ENCODE measurements at regions of chr4 and their contacts with region 1.

Region 1: DNA sequence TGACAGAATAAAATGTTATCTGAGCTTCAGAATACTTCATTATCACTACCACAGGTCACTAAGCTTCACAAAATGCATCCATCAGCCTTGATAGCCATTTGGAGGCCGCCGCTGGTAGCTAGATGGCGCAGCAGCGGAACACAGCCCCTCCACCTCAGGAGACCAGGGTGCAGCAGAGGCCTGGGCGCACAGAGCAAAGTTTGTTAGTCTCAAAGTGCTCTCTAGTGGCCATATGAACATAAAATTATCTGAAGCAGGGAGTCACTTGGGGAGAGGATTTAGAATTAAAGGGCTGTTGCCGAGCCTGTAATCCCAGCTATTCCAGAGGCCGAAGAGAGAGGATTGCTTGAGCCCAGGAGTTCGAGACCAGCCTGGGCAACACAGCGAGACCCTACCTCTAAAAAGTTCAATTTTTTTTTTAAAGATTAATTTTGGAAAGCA is 8.1 kb upstream of the DCTD start:
- DNase-seq: peak; percentile 84
- ATAC-seq: peak; percentile 32
- H3K4me3 ChIP-seq: no peak overlapping the region
- H3K27ac ChIP-seq: no peak overlapping the region
- H3K4me1 ChIP-seq: peaks cover 17% of the 10 kb centered on the region
- H3K27me3 ChIP-seq: no peaks in the 10 kb centered on the region
- CTCF ChIP-seq: peak; percentile 67
- POLR2A ChIP-seq: no peak
- RAD21 ChIP-seq: peak; percentile 67

Region 2: GRCh38 chr4:181569553-181569952 is 1355.8 kb before region 1 on chr4:
- CTCF ChIA-PET with region 1: no interaction called
- POLR2A ChIA-PET with region 1: no interaction called
- dilution Hi-C with region 1: no loop called
- in situ Hi-C with region 1: no loop called
- intact Hi-C with region 1: loop called (anchors 10 kb)
- DNase-seq: peak; percentile 65
- ATAC-seq: peak; percentile 92
- H3K4me3 ChIP-seq: no peak overlapping the region
- H3K27ac ChIP-seq: no peak overlapping the region
- H3K4me1 ChIP-seq: peaks cover 2% of the 10 kb centered on the region; the same call in 1 of the 2 replicates
- H3K27me3 ChIP-seq: no peaks in the 10 kb centered on the region
- CTCF ChIP-seq: peak; percentile 69
- POLR2A ChIP-seq: no peak
- RAD21 ChIP-seq: peak; percentile 79

Region 3: GRCh38 chr4:181952478-181952877 is 972.8 kb before region 1 on chr4:
- CTCF ChIA-PET with region 1: no interaction called
- POLR2A ChIA-PET with region 1: no interaction called
- dilution Hi-C with region 1: no loop called
- in situ Hi-C with region 1: no loop called
- intact Hi-C with region 1: loop called (anchors 10 kb)
- DNase-seq: peak; percentile 96
- ATAC-seq: peak; percentile 85
- H3K4me3 ChIP-seq: no peak overlapping the region
- H3K27ac ChIP-seq: peak overlapping the region; percentile 39
- H3K4me1 ChIP-seq: peaks cover 6% of the 10 kb centered on the region
- H3K27me3 ChIP-seq: no peaks in the 10 kb centered on the region
- CTCF ChIP-seq: no peak
- POLR2A ChIP-seq: no peak
- RAD21 ChIP-seq: no peak

Region 4: GRCh38 chr4:182343453-182343852 is 581.9 kb before region 1 on chr4:
- CTCF ChIA-PET with region 1: no interaction called
- POLR2A ChIA-PET with region 1: no interaction called
- dilution Hi-C with region 1: no loop called
- in situ Hi-C with region 1: no loop called
- intact Hi-C with region 1: loop called (anchors 5 kb)
- DNase-seq: no peak
- ATAC-seq: peak; percentile 29; the same call in 1 of the 2 replicates
- H3K4me3 ChIP-seq: no peak overlapping the region
- H3K27ac ChIP-seq: no peak overlapping the region
- H3K4me1 ChIP-seq: no peaks in the 10 kb centered on the region
- H3K27me3 ChIP-seq: no peaks in the 10 kb centered on the region
- CTCF ChIP-seq: no peak
- POLR2A ChIP-seq: no peak
- RAD21 ChIP-seq: no peak

Region 5: DNA sequence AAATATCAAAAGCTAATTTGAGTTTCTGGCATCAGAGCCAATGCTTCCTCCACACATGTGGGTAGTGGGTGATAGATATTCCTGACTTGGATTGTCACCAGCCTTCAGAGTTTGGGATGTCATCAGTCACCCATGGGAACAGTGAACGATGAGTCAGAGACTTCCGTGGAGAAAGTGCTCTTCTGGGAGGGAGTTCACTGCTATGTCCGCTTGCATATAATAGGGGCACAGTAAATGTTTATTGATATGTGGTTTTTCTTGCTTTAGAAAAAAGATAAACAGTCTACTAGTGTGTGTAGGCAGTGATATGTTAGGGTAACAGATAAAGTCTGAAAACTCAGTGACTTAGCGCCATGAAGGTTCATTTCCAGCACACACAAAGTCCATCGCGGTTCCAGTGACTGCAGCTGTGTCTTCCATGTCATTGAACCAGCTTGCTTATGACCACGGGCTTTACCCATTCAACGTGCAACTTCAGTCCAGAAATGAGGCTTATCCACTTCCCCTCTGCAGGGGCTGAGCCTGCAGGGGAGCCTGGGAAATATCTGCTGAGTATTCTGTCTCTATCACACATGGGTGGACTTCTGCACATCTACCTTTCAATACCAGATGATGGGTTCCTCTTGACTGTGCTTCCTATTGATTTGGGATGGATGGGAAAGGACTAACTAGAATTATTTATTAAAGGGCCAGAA is 86.0 kb after region 1 on chr4:
- CTCF ChIA-PET with region 1: no interaction called
- POLR2A ChIA-PET with region 1: no interaction called
- dilution Hi-C with region 1: no loop called
- in situ Hi-C with region 1: no loop called
- intact Hi-C with region 1: no loop called
- DNase-seq: peak; percentile 65
- ATAC-seq: peak; percentile 90
- H3K4me3 ChIP-seq: no peak overlapping the region
- H3K27ac ChIP-seq: no peak overlapping the region
- H3K4me1 ChIP-seq: peaks cover 3% of the 10 kb centered on the region; the same call in 1 of the 2 replicates
- H3K27me3 ChIP-seq: peaks cover 58% of the 10 kb centered on the region
- CTCF ChIP-seq: no peak
- POLR2A ChIP-seq: no peak
- RAD21 ChIP-seq: no peak